Heart left ventricle (tissue), 16 donors: ENCODE measurements at regions of chr5 and their contacts with region 1.

Region 1: GRCh38 chr5:125992050-125992449 is 431.2 kb upstream of the GRAMD2B start:
- DNase-seq: no peak
- ATAC-seq: no peak
- H3K4me3 ChIP-seq: no peak overlapping the region
- H3K27ac ChIP-seq: no peak overlapping the region
- H3K4me1 ChIP-seq: peaks cover 0 to 6% (median 0%) of the 10 kb centered on the region in 12 donors
- H3K27me3 ChIP-seq: no peaks in the 10 kb centered on the region
- CTCF ChIP-seq: no peak
- POLR2A ChIP-seq: no peak

Region 2: GRCh38 chr5:125517973-125518550 is 474.0 kb before region 1 on chr5:
- intact Hi-C with region 1: no loop called
- DNase-seq: no peak
- ATAC-seq: no peak
- H3K4me3 ChIP-seq: no peak overlapping the region
- H3K27ac ChIP-seq: no peak overlapping the region
- H3K4me1 ChIP-seq: no peaks in the 10 kb centered on the region
- H3K27me3 ChIP-seq: no peaks in the 10 kb centered on the region
- CTCF ChIP-seq: no peak
- POLR2A ChIP-seq: no peak

Region 3: GRCh38 chr5:125813221-125813974 is 178.7 kb before region 1 on chr5:
- intact Hi-C with region 1: no loop called
- DNase-seq: no peak
- ATAC-seq: no peak
- H3K4me3 ChIP-seq: no peak overlapping the region
- H3K27ac ChIP-seq: no peak overlapping the region
- H3K4me1 ChIP-seq: no peaks in the 10 kb centered on the region
- H3K27me3 ChIP-seq: no peaks in the 10 kb centered on the region
- CTCF ChIP-seq: no peak
- POLR2A ChIP-seq: no peak

Region 4: GRCh38 chr5:126031989-126032716 is 40.1 kb after region 1 on chr5:
- intact Hi-C with region 1: no loop called
- DNase-seq: peak; percentile 73 to 86 (median 80)
- ATAC-seq: peak; percentile 93 to 97 (median 95)
- H3K4me3 ChIP-seq: no peak overlapping the region
- H3K27ac ChIP-seq: no peak overlapping the region
- H3K4me1 ChIP-seq: peaks cover 0 to 9% (median 0%) of the 10 kb centered on the region in 12 donors
- H3K27me3 ChIP-seq: no peaks in the 10 kb centered on the region
- CTCF ChIP-seq: no peak
- POLR2A ChIP-seq: no peak

Region 5: GRCh38 chr5:126098330-126099017 is 106.4 kb after region 1 on chr5:
- intact Hi-C with region 1: loop called in 1 of 10 experiments (anchors 10 kb)
- DNase-seq: no peak
- ATAC-seq: no peak
- H3K4me3 ChIP-seq: no peak overlapping the region
- H3K27ac ChIP-seq: no peak overlapping the region
- H3K4me1 ChIP-seq: no peaks in the 10 kb centered on the region
- H3K27me3 ChIP-seq: no peaks in the 10 kb centered on the region
- CTCF ChIP-seq: no peak
- POLR2A ChIP-seq: no peak

Region 6: GRCh38 chr5:126189862-126190261 is 197.8 kb after region 1 on chr5:
- intact Hi-C with region 1: no loop called
- DNase-seq: no peak
- ATAC-seq: no peak
- H3K4me3 ChIP-seq: no peak overlapping the region
- H3K27ac ChIP-seq: no peak overlapping the region
- H3K4me1 ChIP-seq: no peaks in the 10 kb centered on the region
- H3K27me3 ChIP-seq: no peaks in the 10 kb centered on the region
- CTCF ChIP-seq: no peak
- POLR2A ChIP-seq: no peak